Naive thymus-derived CD4-positive, alpha-beta T cell (primary cell): ENCODE measurements at regions of chr3 and their contacts with region 1.

Region 1: DNA sequence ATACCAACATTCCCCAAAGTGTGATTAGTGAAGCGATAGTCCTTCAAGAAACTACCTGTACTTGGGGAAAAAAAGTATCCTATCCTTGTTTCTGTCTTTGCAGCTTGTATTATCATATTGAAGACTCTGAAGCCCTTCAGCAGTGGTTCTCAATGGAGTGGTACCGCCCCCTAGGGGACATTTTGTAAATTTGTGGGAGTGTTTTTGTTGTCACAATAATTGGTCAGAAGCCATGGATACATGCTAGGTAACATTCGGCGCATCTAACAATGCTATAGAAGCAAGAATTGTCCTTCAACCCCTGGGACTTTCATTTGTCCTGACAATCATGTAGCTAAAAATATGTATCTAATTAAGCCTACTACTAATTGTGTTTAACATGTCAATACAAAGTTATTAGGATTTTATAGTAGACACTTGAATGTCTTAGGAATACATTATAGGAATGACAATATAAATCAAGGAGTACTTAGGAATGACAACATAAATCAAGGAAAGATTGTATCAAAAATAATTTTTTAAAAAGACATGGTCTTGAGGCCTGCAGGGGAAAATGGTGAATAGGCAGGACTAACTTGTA is 53.7 kb downstream of the NMD3 start:
- DNase-seq: peak in 8 of 9 donors; percentile 13 to 52 (median 34)
- ATAC-seq: peak; percentile 57
- H3K4me3 ChIP-seq: no peak overlapping the region
- H3K4me3 Mint-ChIP-seq: no peak overlapping the region
- H3K27ac ChIP-seq: no peak overlapping the region
- H3K27ac Mint-ChIP-seq: peak overlapping the region in 1 of 9 donors; percentile 59
- H3K4me1 ChIP-seq: no peaks in the 10 kb centered on the region
- H3K4me1 Mint-ChIP-seq: peaks cover 0 to 9% (median 3%) of the 10 kb centered on the region in 7 donors
- H3K27me3 ChIP-seq: no peaks in the 10 kb centered on the region
- H3K27me3 Mint-ChIP-seq: peaks cover 0 to 4% (median 0%) of the 10 kb centered on the region in 5 donors

Region 2: GRCh38 chr3:160707187-160707794 is 567.5 kb before region 1 on chr3:
- CTCF ChIA-PET with region 1: no interaction called
- POLR2A ChIA-PET with region 1: no interaction called
- intact Hi-C with region 1: loop called (anchors 5 to 10 kb)
- DNase-seq: peak in 7 of 9 donors; percentile 18 to 62 (median 47)
- ATAC-seq: peak; percentile 71
- H3K4me3 ChIP-seq: no peak overlapping the region
- H3K4me3 Mint-ChIP-seq: no peak overlapping the region
- H3K27ac ChIP-seq: no peak overlapping the region
- H3K27ac Mint-ChIP-seq: no peak overlapping the region
- H3K4me1 ChIP-seq: no peaks in the 10 kb centered on the region
- H3K4me1 Mint-ChIP-seq: no peaks in the 10 kb centered on the region
- H3K27me3 ChIP-seq: peaks cover 0 to 5% of the 10 kb centered on the region in 2 donors
- H3K27me3 Mint-ChIP-seq: peaks cover 28 to 43% (median 36%) of the 10 kb centered on the region in 5 donors

Region 3: GRCh38 chr3:160739079-160739478 is 535.7 kb before region 1 on chr3:
- CTCF ChIA-PET with region 1: no interaction called
- POLR2A ChIA-PET with region 1: no interaction called
- intact Hi-C with region 1: no loop called
- DNase-seq: no peak
- ATAC-seq: no peak
- H3K4me3 ChIP-seq: no peak overlapping the region
- H3K4me3 Mint-ChIP-seq: no peak overlapping the region
- H3K27ac ChIP-seq: no peak overlapping the region
- H3K27ac Mint-ChIP-seq: no peak overlapping the region
- H3K4me1 ChIP-seq: no peaks in the 10 kb centered on the region
- H3K4me1 Mint-ChIP-seq: no peaks in the 10 kb centered on the region
- H3K27me3 ChIP-seq: no peaks in the 10 kb centered on the region
- H3K27me3 Mint-ChIP-seq: peaks cover 31 to 43% (median 36%) of the 10 kb centered on the region in 5 donors

Region 4: GRCh38 chr3:160956806-160957205 is 318.0 kb before region 1 on chr3:
- CTCF ChIA-PET with region 1: no interaction called
- POLR2A ChIA-PET with region 1: no interaction called
- intact Hi-C with region 1: loop called in 1 of 2 experiments (anchors 1 kb)
- DNase-seq: no peak
- ATAC-seq: peak; percentile 63
- H3K4me3 ChIP-seq: no peak overlapping the region
- H3K4me3 Mint-ChIP-seq: no peak overlapping the region
- H3K27ac ChIP-seq: no peak overlapping the region
- H3K27ac Mint-ChIP-seq: no peak overlapping the region
- H3K4me1 ChIP-seq: no peaks in the 10 kb centered on the region
- H3K4me1 Mint-ChIP-seq: no peaks in the 10 kb centered on the region
- H3K27me3 ChIP-seq: peaks cover 0 to 2% of the 10 kb centered on the region in 2 donors
- H3K27me3 Mint-ChIP-seq: peaks cover 0 to 15% (median 8%) of the 10 kb centered on the region in 5 donors

Region 5: GRCh38 chr3:161096771-161097355 is 177.9 kb before region 1 on chr3:
- CTCF ChIA-PET with region 1: interaction called, 4 read pairs
- POLR2A ChIA-PET with region 1: no interaction called
- intact Hi-C with region 1: loop called (anchors 1 kb)
- DNase-seq: peak in 5 of 9 donors; percentile 8 to 34 (median 21)
- ATAC-seq: no peak
- H3K4me3 ChIP-seq: no peak overlapping the region
- H3K4me3 Mint-ChIP-seq: no peak overlapping the region
- H3K27ac ChIP-seq: no peak overlapping the region
- H3K27ac Mint-ChIP-seq: no peak overlapping the region
- H3K4me1 ChIP-seq: no peaks in the 10 kb centered on the region
- H3K4me1 Mint-ChIP-seq: peaks cover 0 to 2% (median 0%) of the 10 kb centered on the region in 7 donors
- H3K27me3 ChIP-seq: no peaks in the 10 kb centered on the region
- H3K27me3 Mint-ChIP-seq: peaks cover 0 to 8% (median 0%) of the 10 kb centered on the region in 5 donors